ENCODE measurements at regions of chr13 and their contacts with region 1.

Region 1: GRCh38 chr13:98509271-98510155 is 67.4 kb downstream of the STK24 start:
- DNase-seq: peak; percentile 87
- H3K4me3 Mint-ChIP-seq: peak overlapping the region; percentile 12
- H3K27ac Mint-ChIP-seq: peak overlapping the region; percentile 87
- H3K4me1 Mint-ChIP-seq: peaks cover 56% of the 10 kb centered on the region
- H3K27me3 Mint-ChIP-seq: no peaks in the 10 kb centered on the region
- CTCF ChIP-seq: no peak

Region 2: DNA sequence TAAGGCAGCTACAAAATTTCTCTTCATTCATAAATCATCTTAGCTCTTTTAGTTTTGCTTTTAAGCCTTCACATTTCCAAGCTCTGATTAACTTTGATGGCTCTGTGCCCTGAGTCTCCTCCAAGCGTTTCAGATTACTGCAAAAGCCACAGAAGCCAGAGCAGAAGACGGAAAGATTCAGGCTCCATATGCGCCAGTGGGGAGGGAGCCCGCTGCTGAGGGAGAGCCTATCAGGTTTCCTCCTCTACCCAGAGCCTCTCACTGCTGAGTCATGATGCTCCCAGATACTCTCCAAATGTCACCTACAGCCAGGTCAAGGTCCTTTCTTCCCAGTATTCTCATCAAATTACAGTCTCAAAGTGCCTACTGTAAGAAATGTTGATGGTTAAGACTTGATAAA is 881.9 kb before region 1 on chr13:
- CTCF ChIA-PET with region 1: no interaction called
- POLR2A ChIA-PET with region 1: no interaction called
- intact Hi-C with region 1: no loop called
- DNase-seq: peak; percentile 92
- H3K4me3 Mint-ChIP-seq: no peak overlapping the region
- H3K27ac Mint-ChIP-seq: no peak overlapping the region
- H3K4me1 Mint-ChIP-seq: peaks cover 6% of the 10 kb centered on the region
- H3K27me3 Mint-ChIP-seq: no peaks in the 10 kb centered on the region
- CTCF ChIP-seq: no peak

Region 3: DNA sequence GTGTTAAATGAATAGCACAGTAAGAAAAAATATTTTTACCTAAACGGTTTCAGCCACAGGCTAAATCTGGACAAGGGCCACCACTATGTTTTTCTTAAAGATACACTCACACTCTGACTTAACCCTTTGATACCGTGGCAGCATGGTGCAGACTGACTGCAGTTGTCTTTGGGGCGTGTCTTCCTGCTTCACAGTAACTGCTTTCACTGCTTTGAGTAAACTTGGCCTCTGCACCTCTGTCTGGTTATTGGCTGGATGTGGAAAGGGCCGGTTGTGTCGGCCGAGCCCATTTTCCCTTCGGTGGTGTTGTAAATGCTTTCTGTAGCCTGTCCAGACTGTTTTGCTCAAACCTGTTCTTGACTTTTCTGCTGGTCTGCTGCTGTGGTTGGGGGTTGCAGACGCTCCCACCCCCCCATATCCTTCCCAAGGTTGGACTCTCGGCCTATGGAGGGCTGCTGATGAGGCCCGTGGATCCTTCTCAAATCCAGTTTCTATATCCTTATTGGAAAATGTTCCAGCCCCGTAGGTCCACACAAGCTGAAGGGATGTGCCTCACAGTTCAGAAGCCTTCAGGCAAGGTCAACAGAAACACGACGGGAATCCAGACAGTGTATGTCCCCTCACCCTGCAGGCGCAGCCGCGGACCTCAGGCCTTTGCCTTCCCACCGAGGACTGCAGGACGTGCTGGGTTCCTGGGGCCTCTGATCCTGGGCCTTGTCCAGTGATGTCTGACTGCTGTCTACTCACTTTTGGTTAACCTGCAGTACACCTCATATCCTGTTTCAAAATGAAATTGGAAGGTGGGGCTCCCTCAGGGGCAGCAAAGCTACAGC is 242.2 kb before region 1 on chr13:
- CTCF ChIA-PET with region 1: no interaction called
- POLR2A ChIA-PET with region 1: no interaction called
- intact Hi-C with region 1: no loop called
- DNase-seq: no peak
- H3K4me3 Mint-ChIP-seq: no peak overlapping the region
- H3K27ac Mint-ChIP-seq: no peak overlapping the region
- H3K4me1 Mint-ChIP-seq: no peaks in the 10 kb centered on the region
- H3K27me3 Mint-ChIP-seq: no peaks in the 10 kb centered on the region
- CTCF ChIP-seq: no peak

Region 4: DNA sequence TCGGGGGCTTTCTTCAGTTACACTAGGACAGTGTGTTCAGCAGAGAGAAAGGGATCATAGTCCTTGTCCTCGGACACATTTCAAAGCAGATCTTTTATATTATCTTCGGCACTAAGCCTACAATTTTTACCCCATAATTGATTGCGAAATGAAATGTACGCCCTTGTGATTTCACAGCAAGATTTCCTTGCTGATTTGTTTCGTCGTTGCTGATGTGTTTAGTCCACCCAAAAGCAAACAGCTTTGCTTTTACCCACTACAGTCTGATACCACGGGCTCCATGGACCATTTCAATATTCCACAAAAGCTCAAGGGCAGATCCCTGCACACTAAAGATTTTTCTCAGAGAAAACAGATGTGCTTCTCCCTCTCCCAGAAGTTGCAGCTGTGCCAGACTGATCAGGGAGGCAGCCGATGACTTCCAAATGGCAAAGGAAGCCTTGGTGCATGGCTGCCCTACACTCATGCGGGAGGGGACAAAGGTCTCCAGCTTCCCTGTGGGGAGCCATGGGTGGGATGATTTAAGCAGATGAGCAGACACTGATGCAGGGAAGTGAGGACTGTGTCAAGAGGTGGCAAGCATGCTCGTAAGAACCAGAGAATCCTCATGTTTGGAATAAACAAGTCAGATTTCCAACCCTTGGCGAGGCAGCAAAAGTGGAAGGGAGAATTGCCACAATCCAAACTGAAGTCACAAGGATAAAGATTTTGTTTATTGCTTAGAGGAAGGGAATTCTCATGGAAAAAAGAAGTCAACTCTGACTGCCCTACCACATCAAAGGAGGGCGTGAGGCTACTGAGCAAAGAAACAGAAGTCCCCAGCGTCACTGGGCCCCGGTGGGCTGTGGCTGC is 13.7 kb before region 1 on chr13:
- CTCF ChIA-PET with region 1: interaction called, 3 read pairs
- POLR2A ChIA-PET with region 1: interaction called, 18 read pairs
- intact Hi-C with region 1: no loop called
- DNase-seq: peak; percentile 14
- H3K4me3 Mint-ChIP-seq: no peak overlapping the region
- H3K27ac Mint-ChIP-seq: no peak overlapping the region
- H3K4me1 Mint-ChIP-seq: peaks cover 36% of the 10 kb centered on the region
- H3K27me3 Mint-ChIP-seq: no peaks in the 10 kb centered on the region
- CTCF ChIP-seq: no peak

Region 5: GRCh38 chr13:98520674-98521449 is 11.3 kb after region 1 on chr13:
- CTCF ChIA-PET with region 1: interaction called, 6 read pairs
- POLR2A ChIA-PET with region 1: interaction called, 10 read pairs
- intact Hi-C with region 1: no loop called
- DNase-seq: no peak
- H3K4me3 Mint-ChIP-seq: no peak overlapping the region
- H3K27ac Mint-ChIP-seq: peak overlapping the region; percentile 71
- H3K4me1 Mint-ChIP-seq: peaks cover 26% of the 10 kb centered on the region
- H3K27me3 Mint-ChIP-seq: no peaks in the 10 kb centered on the region
- CTCF ChIP-seq: no peak

Region 6: GRCh38 chr13:98570929-98571372 is 61.4 kb after region 1 on chr13:
- CTCF ChIA-PET with region 1: interaction called, 3 read pairs
- POLR2A ChIA-PET with region 1: interaction called, 45 read pairs
- intact Hi-C with region 1: loop called (anchors 2 kb)
- DNase-seq: peak; percentile 69
- H3K4me3 Mint-ChIP-seq: peak overlapping the region; percentile 68
- H3K27ac Mint-ChIP-seq: peak overlapping the region; percentile 76
- H3K4me1 Mint-ChIP-seq: peaks cover 64% of the 10 kb centered on the region
- H3K27me3 Mint-ChIP-seq: no peaks in the 10 kb centered on the region
- CTCF ChIP-seq: no peak

Region 7: DNA sequence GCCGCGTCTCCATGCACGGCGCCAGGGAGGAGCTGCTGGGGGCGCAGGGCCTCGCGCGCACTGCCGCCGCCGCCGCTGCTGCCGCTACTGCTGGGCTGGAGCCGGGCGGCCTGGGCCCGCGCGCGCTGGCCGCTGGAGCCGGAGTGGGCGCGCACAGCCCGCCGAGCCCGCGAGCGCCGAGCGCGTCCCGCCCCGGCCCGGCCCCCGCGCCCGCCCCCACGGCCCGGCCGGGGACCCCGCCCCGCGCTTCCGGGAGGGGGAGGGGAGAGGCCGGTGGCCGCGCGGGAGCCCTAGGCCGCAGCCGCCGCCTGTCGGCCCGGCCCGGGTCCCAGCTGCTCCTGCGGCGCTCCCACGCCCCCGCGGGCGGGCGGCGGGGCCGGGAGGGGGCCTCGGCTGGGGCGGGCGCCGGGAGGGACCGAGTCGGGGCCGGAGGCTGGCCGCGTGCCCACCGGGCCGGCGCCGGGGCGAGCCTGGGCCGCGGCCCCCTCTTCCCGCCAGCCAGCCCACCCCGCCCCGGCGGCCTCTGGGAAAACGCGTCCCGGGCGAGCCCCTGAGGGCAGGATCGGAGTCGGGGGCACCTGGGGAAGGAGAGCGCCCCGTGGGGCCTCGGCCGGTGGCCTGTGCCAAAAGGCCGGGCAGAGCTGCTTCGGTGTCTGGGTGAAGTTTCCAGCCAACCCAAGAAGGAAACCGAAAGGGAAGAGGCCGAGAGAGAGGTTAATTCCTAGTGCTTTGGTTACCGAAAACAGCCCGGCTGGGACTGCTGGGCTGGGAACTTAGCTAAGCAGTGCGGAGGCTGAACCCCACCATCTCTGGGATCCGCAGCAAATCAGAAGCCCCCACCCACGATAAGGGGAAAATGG is 67.7 kb after region 1 on chr13 and contains the start of gene STK24:
- CTCF ChIA-PET with region 1: interaction called, 5 read pairs
- POLR2A ChIA-PET with region 1: interaction called, 45 read pairs
- intact Hi-C with region 1: loop called (anchors 2 kb)
- DNase-seq: peak; percentile 67
- H3K4me3 Mint-ChIP-seq: peak within 1 kb of the TSS; percentile 82
- H3K27ac Mint-ChIP-seq: peak within 1 kb of the TSS; percentile 83
- H3K4me1 Mint-ChIP-seq: peaks cover 22% of the 10 kb centered on the region
- H3K27me3 Mint-ChIP-seq: no peaks in the 10 kb centered on the region
- CTCF ChIP-seq: no peak
- total RNA-seq, gene STK24: 200 and 215 TPM in 2 replicates

Measured in MCF 10A (cell line).